ENCODE measurements at regions of chr5 and their contacts with region 1.

Region 1: DNA sequence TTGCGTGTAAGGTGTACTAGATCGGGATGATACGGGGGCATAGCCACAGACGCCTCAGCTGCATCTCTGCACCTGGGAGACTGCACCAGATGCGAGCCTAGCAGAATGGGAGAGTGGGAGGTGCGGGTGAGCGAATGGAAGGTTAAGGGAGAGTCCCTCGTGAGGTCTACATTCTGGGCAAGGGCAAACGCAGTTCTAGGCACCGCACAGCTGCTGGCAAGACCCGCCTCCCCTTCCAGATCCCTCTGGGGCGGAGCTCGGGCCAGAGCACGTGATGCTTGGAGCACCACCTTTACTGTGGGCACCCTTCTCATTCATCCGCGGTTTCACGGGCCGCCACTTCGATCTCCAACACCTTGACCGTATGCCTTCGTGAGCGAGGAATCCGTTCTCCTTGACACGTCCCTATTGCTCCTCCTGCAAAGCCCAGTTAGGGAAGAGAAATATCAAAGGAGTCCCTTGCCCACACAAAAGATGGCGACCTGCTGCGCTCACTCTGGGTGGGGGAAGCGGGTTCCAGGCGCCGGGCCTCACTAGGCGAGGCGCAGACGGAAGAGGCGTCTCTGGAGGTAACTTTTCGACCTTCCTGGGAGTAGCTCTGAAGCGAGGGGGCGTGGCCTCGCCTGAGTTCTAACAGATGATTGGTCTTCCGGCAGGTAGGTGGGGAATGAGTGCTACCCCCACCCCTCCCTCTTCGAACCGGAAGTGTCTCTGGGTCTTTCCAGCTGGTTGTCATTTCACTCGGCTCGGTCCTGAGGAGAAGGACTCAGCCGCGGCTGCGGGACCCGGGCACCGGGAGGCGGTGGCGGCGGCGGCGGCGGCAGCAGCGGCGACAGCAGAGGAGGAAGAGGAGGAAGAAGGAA is at the start of gene CPEB4:
- DNase-seq: peak; percentile 99
- total RNA-seq, gene CPEB4: 187 TPM

Region 2: DNA sequence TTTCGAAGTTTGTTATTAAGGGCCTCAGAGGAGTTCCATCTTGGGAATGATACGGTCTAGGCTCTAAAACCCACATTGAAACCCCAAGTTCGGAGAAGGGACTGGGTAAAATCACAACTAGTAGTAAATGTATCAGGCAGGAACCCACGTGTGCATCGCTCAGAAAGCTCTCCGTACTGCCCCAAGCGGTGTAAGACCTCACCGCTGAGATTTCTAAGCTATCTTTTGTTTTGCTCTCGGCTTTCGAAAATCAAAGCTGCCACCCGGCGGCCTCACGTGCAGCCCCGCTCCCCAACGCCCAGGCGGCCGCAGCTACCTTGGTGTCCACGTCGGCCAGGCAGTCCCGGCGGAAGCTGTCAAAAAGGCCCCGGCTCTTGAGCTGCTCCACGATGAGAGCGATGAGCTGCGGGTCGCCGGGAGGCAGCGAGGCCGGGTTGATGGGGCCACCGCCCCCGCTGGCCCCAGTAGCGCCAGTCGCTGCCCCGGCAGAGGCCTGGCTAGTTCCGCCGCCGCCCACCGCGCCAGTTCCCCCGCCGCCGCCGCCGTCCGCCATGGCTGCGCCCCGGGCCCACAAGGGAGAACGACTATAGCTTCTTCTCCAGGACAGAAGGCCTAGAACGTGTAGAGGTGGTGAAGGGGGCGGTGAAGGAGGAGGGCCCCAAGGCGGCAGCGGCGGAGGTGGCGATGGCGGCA is 271.8 kb before region 1 on chr5:
- intact Hi-C with region 1: loop called (anchors 2 kb)
- DNase-seq: peak; percentile 78

Region 3: GRCh38 chr5:173772384-173773059 is 115.3 kb before region 1 on chr5:
- intact Hi-C with region 1: loop called (anchors 5 kb)
- DNase-seq: no peak

Region 4: DNA sequence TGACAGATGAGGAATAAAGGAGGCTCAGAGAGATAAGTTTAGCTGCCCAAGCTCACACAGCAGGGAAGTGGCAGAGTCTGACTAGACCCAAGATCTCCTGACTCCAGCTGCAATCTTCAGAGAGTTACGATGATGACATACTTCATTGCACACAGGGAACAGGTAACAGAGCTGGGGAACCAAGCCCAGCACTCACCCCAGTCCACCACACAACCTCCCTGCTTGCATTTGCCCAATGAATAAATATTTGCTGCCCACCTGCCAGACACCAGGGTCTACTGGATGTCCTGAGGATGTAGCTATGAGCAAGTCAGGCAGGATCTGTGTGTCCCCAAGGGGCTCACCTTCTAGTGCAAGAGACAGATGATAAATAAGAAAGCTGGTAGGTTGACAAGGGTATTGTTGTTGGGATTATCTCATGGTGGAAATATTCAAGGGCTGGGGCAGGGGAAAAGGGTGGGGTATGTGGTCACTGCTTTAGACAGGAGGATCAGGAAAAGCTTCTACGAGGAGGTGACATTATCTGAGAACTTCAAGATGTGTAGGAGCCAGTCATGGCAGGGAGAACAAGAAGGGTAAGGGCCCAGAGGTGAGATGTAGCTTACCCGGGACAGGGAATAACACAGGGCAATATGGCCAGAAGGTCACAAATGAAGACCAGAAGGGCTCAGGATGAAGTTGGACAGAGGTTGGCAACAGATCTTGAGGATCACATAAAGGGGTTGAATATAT is 28.2 kb before region 1 on chr5:
- intact Hi-C with region 1: loop called (anchors 2 kb)
- DNase-seq: no peak

Region 5: GRCh38 chr5:173920024-173920753 is 32.3 kb after region 1 on chr5:
- intact Hi-C with region 1: loop called (anchors 2 kb)
- DNase-seq: no peak

Region 6: GRCh38 chr5:173972925-173973615 is 85.2 kb after region 1 on chr5:
- intact Hi-C with region 1: loop called (anchors 2 kb)
- DNase-seq: peak; percentile 85